Activated naive CD4-positive, alpha-beta T cell treated with anti-CD3 and anti-CD28 coated beads, Interleukin-2, amount 10 ng/mL, durations not matched to agents 7 days and 5 days (primary cell): ENCODE measurements at regions of chr4 and their contacts with region 1.

Region 1: GRCh38 chr4:143558823-143559756 is 45.6 kb downstream of the SMARCA5 start:
- DNase-seq: peak; percentile 78
- H3K4me3 Mint-ChIP-seq: peak overlapping the region; percentile 81
- H3K27ac Mint-ChIP-seq: peak overlapping the region; percentile 94
- H3K4me1 Mint-ChIP-seq: peaks cover 23% of the 10 kb centered on the region
- H3K27me3 Mint-ChIP-seq: no peaks in the 10 kb centered on the region

Region 2: DNA sequence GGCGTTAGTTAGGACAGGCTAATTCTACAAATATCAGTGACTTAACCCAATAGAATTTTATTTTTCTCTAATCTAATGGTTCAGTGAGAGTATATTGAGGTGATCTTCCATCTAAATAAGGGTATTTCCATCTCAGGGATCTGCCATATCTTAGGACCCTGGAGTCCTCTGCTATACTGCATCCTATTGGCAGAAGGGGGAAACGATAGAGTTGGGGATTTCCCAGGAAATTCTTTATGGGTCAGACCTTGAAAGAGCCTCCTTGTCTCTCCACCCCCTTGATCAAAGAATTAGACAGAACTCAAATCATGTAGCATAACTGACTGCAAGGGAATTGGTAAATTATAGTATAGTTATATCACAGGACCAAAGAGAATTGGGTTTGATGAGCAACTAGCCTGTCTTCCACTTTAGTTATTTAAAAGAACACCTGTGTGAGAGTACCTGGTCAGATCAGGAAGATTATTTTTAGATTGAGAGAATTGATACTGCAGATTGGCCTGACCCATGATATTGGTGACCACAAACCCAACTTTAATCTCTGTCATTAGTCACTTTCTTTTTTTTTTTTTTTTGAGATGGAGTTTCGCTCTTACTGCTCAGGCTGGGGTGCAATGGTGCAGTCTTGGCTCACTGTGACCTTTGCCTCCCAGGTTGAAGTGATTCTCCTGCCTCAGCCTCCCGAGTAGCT is 20.0 kb before region 1 on chr4:
- CTCF ChIA-PET with region 1: interaction called, 11 read pairs
- DNase-seq: no peak
- H3K4me3 Mint-ChIP-seq: no peak overlapping the region
- H3K27ac Mint-ChIP-seq: no peak overlapping the region
- H3K4me1 Mint-ChIP-seq: no peaks in the 10 kb centered on the region
- H3K27me3 Mint-ChIP-seq: no peaks in the 10 kb centered on the region

Region 3: GRCh38 chr4:143575331-143575730 is 16.2 kb after region 1 on chr4:
- CTCF ChIA-PET with region 1: interaction called, 14 read pairs
- DNase-seq: no peak
- H3K4me3 Mint-ChIP-seq: no peak overlapping the region
- H3K27ac Mint-ChIP-seq: no peak overlapping the region
- H3K4me1 Mint-ChIP-seq: no peaks in the 10 kb centered on the region
- H3K27me3 Mint-ChIP-seq: no peaks in the 10 kb centered on the region

Region 4: GRCh38 chr4:144259285-144259684 is 700.2 kb after region 1 on chr4:
- CTCF ChIA-PET with region 1: no interaction called
- DNase-seq: no peak
- H3K4me3 Mint-ChIP-seq: no peak overlapping the region
- H3K27ac Mint-ChIP-seq: no peak overlapping the region
- H3K4me1 Mint-ChIP-seq: no peaks in the 10 kb centered on the region
- H3K27me3 Mint-ChIP-seq: no peaks in the 10 kb centered on the region